ENCODE measurements at regions of chr12 and their contacts with region 1.

Region 1: GRCh38 chr12:25200703-25201102 is 5.7 kb downstream of the ETFRF1 start:
- DNase-seq: no peak
- H3K4me3 ChIP-seq: no peak overlapping the region
- H3K27ac ChIP-seq: no peak overlapping the region
- H3K4me1 ChIP-seq: no peaks in the 10 kb centered on the region
- H3K27me3 ChIP-seq: no peaks in the 10 kb centered on the region
- CTCF ChIP-seq: no peak
- POLR2A ChIP-seq: no peak

Region 2: GRCh38 chr12:24408305-24408704 is 792.4 kb before region 1 on chr12:
- intact Hi-C with region 1: loop called (anchors 5 kb)
- DNase-seq: no peak
- H3K4me3 ChIP-seq: no peak overlapping the region
- H3K27ac ChIP-seq: no peak overlapping the region
- H3K4me1 ChIP-seq: no peaks in the 10 kb centered on the region
- H3K27me3 ChIP-seq: no peaks in the 10 kb centered on the region
- CTCF ChIP-seq: no peak
- POLR2A ChIP-seq: no peak

Measured in breast epithelium (tissue), 4 donors.